Ascending aorta (tissue), 2 donors: ENCODE measurements at regions of chr2 and their contacts with region 1.

Region 1: GRCh38 chr2:17851731-17852585 is 26.5 kb upstream of the KCNS3 start:
- DNase-seq: peak in 1 of 2 donors; percentile 72
- H3K4me3 ChIP-seq: no peak overlapping the region
- H3K27ac ChIP-seq: no peak overlapping the region
- H3K4me1 ChIP-seq: no peaks in the 10 kb centered on the region
- H3K27me3 ChIP-seq: no peaks in the 10 kb centered on the region
- CTCF ChIP-seq: peak; percentile 74 to 94 (median 89)

Region 2: GRCh38 chr2:18149645-18150246 is 297.8 kb after region 1 on chr2:
- intact Hi-C with region 1: loop called (anchors 1 kb)
- DNase-seq: no peak
- H3K4me3 ChIP-seq: no peak overlapping the region
- H3K27ac ChIP-seq: no peak overlapping the region
- H3K4me1 ChIP-seq: no peaks in the 10 kb centered on the region
- H3K27me3 ChIP-seq: no peaks in the 10 kb centered on the region
- CTCF ChIP-seq: peak; percentile 34 to 86 (median 70)

Region 3: DNA sequence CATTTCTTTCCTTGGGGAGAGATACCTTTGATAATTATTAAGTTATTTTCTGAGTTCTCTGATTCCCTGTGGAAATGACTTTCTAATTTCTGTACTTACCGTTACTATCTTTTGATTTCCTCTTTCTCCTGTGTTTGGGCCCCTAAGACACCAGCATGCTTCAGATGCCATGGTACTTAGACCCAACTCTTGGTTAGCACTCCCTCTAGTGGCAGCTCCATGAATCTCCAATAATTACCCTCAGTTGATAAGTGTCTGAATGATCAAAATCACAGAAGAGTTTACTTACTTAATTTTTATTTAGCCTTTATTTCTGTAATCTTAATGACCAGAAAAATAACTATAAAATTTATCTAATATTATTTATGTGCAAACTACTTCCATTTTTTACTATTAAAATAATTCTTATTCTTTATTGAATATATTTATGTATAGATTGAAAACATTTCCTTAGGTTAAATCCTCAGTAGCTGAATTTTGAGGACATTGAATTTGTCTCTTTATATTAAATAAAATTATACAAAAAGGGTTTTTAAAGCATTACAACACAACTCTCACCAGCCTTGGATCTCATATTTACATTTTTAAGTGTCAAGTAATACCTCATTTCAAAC is 326.9 kb after region 1 on chr2:
- intact Hi-C with region 1: loop called (anchors 1 kb)
- DNase-seq: no peak
- H3K4me3 ChIP-seq: no peak overlapping the region
- H3K27ac ChIP-seq: no peak overlapping the region
- H3K4me1 ChIP-seq: no peaks in the 10 kb centered on the region
- H3K27me3 ChIP-seq: no peaks in the 10 kb centered on the region
- CTCF ChIP-seq: peak in 2 of 3 experiments; percentile 74 to 83

Region 4: GRCh38 chr2:18378020-18378653 is 526.2 kb after region 1 on chr2:
- intact Hi-C with region 1: loop called (anchors 5 kb)
- DNase-seq: no peak
- H3K4me3 ChIP-seq: no peak overlapping the region
- H3K27ac ChIP-seq: no peak overlapping the region
- H3K4me1 ChIP-seq: no peaks in the 10 kb centered on the region
- H3K27me3 ChIP-seq: no peaks in the 10 kb centered on the region
- CTCF ChIP-seq: peak; percentile 58 to 84 (median 79)